Astrocyte of the cerebellum (primary cell): ENCODE measurements at regions of chr6 and their contacts with region 1.

Region 1: GRCh38 chr6:155194399-155194798 is 69.4 kb upstream of the CLDN20 start:
- DNase-seq: no peak
- H3K4me3 ChIP-seq: no peak overlapping the region
- CTCF ChIP-seq: no peak

Region 2: DNA sequence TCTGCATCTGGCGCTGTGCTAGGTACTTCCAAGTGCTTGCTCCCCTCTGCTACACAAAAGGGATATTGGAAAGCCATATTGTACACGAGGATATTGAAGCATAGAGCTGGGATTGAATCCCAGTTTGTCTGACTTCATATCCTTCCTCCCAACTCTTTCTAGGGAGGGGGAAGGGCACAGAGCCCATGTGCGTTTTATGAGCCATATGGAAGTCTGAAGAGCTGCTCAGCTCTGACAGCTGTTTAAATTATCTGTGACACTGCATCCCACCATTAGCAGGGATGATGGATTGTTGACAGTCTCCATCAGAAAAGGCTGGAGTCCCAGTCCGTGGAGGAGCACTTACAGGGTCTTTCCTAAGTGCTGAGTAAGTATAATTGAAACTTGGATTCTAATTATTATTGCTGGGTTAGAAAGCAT is 180.9 kb before region 1 on chr6:
- in situ Hi-C with region 1: no loop called
- DNase-seq: no peak
- H3K4me3 ChIP-seq: no peak overlapping the region
- CTCF ChIP-seq: no peak

Region 3: DNA sequence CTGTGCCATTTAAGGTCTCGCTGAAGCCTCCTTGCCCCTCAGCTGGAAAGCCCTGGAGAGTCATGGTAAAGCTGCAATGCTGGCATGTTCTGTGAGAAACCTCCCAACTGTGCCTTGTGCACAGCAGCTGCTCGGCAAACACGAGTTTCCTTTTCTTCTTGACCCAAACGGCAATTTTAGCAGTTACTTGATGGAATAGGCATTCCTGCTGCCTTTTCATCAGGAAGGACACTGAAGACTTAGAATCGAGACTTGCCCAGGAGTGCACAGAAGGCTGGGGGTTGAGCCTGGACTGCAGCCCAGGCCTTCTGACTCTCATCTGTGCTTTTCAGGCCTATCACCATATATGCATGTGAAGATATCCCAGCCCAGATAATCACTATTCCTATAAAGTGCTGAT is 40.7 kb after region 1 on chr6:
- in situ Hi-C with region 1: loop called (anchors 5 kb)
- DNase-seq: no peak
- H3K4me3 ChIP-seq: no peak overlapping the region
- CTCF ChIP-seq: no peak

Region 4: DNA sequence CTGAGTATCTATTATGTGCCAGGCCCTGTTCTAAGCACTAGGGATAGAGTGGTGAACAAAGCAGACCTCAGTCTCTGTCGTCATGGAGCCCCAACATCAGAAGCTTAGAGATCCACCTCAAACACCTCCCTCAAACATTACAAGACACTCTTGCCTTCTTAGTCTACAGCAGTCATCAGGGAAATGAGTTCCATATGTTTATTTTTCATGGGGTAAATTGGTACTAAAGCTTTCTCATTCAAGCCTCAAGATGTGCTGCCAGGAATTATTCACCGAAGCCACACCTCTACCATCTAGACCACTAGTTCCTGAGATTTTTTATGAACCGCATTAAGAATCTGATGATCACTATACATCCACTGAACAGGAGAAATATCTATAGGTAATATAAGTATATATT is 178.9 kb after region 1 on chr6:
- in situ Hi-C with region 1: no loop called
- DNase-seq: no peak
- H3K4me3 ChIP-seq: no peak overlapping the region
- CTCF ChIP-seq: no peak